ENCODE measurements at regions of chr17 and their contacts with region 1.

Region 1: DNA sequence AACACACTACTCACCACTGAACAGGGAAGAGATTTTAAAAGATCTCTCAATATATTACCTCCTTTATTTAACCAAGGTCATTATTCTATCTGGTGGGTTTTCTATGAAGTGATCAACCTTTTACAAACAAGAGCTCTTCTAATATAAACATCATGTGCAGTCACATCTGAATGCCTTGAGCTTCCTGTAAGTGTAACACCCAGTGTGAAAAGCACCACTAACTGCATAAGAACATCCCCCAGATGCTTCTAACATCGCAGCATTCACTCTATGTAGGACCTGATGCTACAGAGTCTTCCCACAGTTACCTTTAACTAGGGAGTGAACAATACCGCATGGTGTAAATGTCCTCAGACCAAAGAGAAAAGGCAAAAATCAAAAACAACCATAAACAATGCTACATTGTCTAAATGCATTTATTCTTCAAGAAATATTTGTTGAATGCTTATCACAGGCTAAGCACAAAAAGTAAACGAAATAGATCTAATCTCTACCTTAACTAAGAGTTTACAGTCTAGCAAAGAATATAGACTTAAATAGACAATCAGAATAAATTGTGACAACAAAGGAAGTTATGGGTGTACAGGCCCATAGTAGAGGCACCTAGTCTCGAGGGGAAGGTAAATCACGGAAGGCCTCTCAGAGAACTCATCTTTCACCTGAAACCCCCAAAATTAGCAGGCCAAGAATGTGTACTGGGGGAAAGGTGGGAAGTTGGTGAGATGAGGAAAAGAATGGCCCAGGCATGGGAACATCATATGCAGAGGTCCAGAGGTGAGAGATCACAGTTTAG is 16.2 kb downstream of the SKAP1 start:
- DNase-seq: no peak
- H3K4me3 Mint-ChIP-seq: peak overlapping the region; percentile 24
- H3K27ac Mint-ChIP-seq: peak overlapping the region; percentile 86
- H3K4me1 Mint-ChIP-seq: peaks cover 82% of the 10 kb centered on the region
- H3K27me3 Mint-ChIP-seq: no peaks in the 10 kb centered on the region

Region 2: DNA sequence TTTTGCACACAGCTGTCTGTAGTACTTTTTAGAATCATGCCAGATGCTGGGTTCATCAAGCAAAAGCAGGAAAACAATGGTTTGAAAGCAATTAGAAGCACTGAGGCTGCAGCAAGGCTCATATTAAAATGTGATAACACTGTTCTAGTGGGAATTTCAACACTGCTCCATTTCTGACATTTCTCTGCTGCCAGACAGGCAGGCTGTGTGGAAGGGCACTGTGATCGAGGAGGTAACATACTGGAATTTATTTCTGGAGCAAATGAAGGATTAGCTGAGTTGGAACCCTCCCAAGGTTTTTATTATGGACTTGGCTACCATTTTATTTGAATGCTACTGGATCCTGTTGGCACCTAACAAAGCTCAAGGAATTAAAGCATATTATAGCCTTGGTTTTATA is 50.6 kb before region 1 on chr17:
- intact Hi-C with region 1: no loop called
- DNase-seq: no peak
- H3K4me3 Mint-ChIP-seq: no peak overlapping the region
- H3K27ac Mint-ChIP-seq: no peak overlapping the region
- H3K4me1 Mint-ChIP-seq: peaks cover 11% of the 10 kb centered on the region
- H3K27me3 Mint-ChIP-seq: no peaks in the 10 kb centered on the region

Region 3: GRCh38 chr17:48374650-48375230 is 39.1 kb before region 1 on chr17:
- intact Hi-C with region 1: loop called (anchors 5 kb)
- DNase-seq: no peak
- H3K4me3 Mint-ChIP-seq: no peak overlapping the region
- H3K27ac Mint-ChIP-seq: no peak overlapping the region
- H3K4me1 Mint-ChIP-seq: peaks cover 22% of the 10 kb centered on the region
- H3K27me3 Mint-ChIP-seq: no peaks in the 10 kb centered on the region

Region 4: GRCh38 chr17:48391444-48391843 is 22.4 kb before region 1 on chr17:
- intact Hi-C with region 1: loop called (anchors 1 kb)
- DNase-seq: no peak
- H3K4me3 Mint-ChIP-seq: no peak overlapping the region
- H3K27ac Mint-ChIP-seq: no peak overlapping the region
- H3K4me1 Mint-ChIP-seq: peaks cover 20% of the 10 kb centered on the region
- H3K27me3 Mint-ChIP-seq: no peaks in the 10 kb centered on the region

Region 5: GRCh38 chr17:48429638-48430586 is 16.1 kb after region 1 on chr17 and contains the start of gene SKAP1:
- intact Hi-C with region 1: loop called (anchors 1 kb)
- DNase-seq: peak; percentile 68
- H3K4me3 Mint-ChIP-seq: peak within 1 kb of the TSS; percentile 98
- H3K27ac Mint-ChIP-seq: peak within 1 kb of the TSS; percentile 99
- H3K4me1 Mint-ChIP-seq: peaks cover 72% of the 10 kb centered on the region
- H3K27me3 Mint-ChIP-seq: peaks cover 1% of the 10 kb centered on the region
- total RNA-seq, gene SKAP1: 48.7 and 51.9 TPM in 2 replicates

Region 6: GRCh38 chr17:48441231-48441711 is 27.5 kb after region 1 on chr17:
- intact Hi-C with region 1: loop called (anchors 1 kb)
- DNase-seq: peak; percentile 42
- H3K4me3 Mint-ChIP-seq: peak overlapping the region; percentile 59
- H3K27ac Mint-ChIP-seq: peak overlapping the region; percentile 93
- H3K4me1 Mint-ChIP-seq: peaks cover 88% of the 10 kb centered on the region
- H3K27me3 Mint-ChIP-seq: no peaks in the 10 kb centered on the region

Region 7: GRCh38 chr17:48505787-48506645 is 92.2 kb after region 1 on chr17:
- intact Hi-C with region 1: loop called (anchors 1 kb)
- DNase-seq: peak; percentile 70
- H3K4me3 Mint-ChIP-seq: peak overlapping the region; percentile 60
- H3K27ac Mint-ChIP-seq: peak overlapping the region; percentile 84
- H3K4me1 Mint-ChIP-seq: peaks cover 49% of the 10 kb centered on the region
- H3K27me3 Mint-ChIP-seq: peaks cover 8% of the 10 kb centered on the region

Region 8: DNA sequence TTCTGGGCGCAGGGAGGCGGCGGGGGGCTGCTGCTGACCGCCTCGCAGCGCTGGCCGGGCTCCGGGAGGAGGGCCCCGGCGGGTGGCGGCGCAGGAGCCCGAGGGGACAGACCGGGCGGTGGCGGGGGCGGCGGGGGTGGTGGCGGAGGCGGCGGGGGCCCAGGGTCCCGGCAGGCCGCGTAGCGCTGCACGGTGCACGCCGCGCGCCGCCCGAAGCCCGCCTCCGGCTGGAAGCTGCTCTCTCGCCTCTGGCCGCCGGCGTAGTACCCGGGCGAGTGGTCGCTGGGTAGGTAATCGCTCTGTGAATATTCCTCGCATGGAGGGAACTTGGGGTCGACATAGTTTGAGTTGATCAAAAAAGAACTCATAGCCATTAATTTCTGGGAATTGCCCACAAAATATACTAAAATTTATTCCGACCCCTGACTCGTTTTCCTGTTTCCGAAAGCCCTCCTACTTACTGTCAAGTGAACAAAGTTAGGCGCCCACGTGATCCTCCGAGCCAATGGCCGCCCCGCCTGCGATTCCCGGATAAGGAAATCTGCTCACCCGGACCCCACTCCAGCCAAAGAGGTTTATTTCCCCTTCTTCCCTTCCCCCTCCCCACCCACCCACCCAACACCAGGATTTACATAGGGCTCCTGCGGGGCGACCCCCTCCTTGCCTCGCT is 164.3 kb after region 1 on chr17 and contains the start of gene HOXB4:
- intact Hi-C with region 1: loop called (anchors 2 kb)
- DNase-seq: peak; percentile 68
- H3K4me3 Mint-ChIP-seq: peak within 1 kb of the TSS; percentile 91
- H3K27ac Mint-ChIP-seq: peak within 1 kb of the TSS; percentile 86
- H3K4me1 Mint-ChIP-seq: peaks cover 66% of the 10 kb centered on the region
- H3K27me3 Mint-ChIP-seq: peaks cover 37% of the 10 kb centered on the region
- total RNA-seq, gene HOXB4: 3.8 and 4.2 TPM in 2 replicates